ENCODE measurements at regions of chr16 and their contacts with region 1.

Region 1: GRCh38 chr16:9134739-9135138 is 43.3 kb downstream of the HAPSTR1 start:
- DNase-seq: peak; percentile 79
- H3K4me3 Mint-ChIP-seq: no peak overlapping the region
- H3K27ac Mint-ChIP-seq: no peak overlapping the region
- H3K4me1 Mint-ChIP-seq: peaks cover 12% of the 10 kb centered on the region
- H3K27me3 Mint-ChIP-seq: peaks cover 8% of the 10 kb centered on the region

Region 2: DNA sequence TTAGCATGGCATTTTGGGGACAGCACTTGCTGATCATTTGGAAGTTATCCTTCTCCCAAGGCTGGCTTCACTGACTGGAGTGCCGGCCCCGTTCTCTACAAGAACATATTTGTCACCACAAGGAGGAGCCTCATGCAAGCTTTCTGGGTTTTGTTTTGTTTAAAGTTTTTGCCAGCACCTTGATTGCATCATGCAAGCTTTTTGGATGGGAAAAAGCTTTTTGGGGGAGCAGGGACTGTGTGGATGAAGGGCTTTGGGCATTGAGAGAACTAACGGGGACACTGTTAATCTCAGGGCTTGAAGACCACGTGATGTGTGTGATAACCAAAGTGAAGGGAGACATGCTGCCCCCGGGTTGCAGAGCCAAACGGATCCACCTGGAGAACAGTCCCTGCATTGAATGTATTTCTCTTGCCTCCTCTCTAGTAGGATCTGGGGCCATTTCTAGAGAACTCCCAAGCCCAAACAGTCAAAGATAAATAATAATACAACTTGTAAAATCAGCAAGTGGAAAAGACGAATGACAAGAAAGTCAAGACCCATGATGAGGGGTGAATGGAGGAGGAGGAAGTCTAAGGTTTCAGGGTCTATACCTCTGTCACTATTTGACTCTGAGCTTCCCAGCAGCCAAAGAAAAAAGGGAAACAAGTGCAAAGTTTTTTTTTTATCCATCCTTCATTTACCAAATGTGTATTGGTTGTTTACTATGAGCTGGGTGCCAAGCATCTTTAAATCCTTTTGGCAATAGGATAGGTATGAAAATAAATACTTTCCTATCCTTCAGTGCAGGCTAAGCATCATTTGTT is 561.6 kb before region 1 on chr16:
- CTCF ChIA-PET with region 1: no interaction called
- POLR2A ChIA-PET with region 1: no interaction called
- intact Hi-C with region 1: loop called (anchors 5 kb)
- DNase-seq: peak; percentile 21
- H3K4me3 Mint-ChIP-seq: no peak overlapping the region
- H3K27ac Mint-ChIP-seq: no peak overlapping the region
- H3K4me1 Mint-ChIP-seq: peaks cover 1% of the 10 kb centered on the region
- H3K27me3 Mint-ChIP-seq: peaks cover 10% of the 10 kb centered on the region

Region 3: DNA sequence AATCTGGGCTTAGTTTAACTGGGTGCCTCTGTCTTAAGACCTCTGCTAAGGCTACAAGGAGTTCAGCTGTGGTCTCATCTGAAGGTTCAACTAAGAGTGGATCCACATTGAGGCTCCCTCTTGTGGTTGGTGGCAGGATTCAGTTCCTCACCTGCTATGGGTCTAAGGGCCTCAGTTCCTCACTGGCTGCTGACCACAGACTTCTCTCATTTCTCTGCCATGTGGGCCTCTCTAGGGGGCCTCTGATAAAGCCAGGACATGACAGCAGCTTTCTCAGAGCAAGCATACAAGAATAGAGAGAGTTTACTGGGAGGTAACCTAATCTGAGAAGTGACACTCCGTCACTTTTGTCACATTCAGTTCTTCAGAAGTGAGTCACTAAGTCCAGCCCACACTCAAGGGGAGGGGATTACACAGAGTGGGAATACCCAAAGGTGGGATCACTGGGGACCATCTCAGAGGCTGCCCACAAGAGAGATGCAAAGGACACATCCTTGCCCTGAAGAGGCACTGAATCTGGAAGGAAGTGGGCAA is 479.5 kb before region 1 on chr16:
- CTCF ChIA-PET with region 1: interaction called, 3 read pairs
- POLR2A ChIA-PET with region 1: no interaction called
- intact Hi-C with region 1: loop called (anchors 5 kb)
- DNase-seq: peak; percentile 81
- H3K4me3 Mint-ChIP-seq: no peak overlapping the region
- H3K27ac Mint-ChIP-seq: peak overlapping the region; percentile 64
- H3K4me1 Mint-ChIP-seq: peaks cover 18% of the 10 kb centered on the region
- H3K27me3 Mint-ChIP-seq: no peaks in the 10 kb centered on the region

Region 4: DNA sequence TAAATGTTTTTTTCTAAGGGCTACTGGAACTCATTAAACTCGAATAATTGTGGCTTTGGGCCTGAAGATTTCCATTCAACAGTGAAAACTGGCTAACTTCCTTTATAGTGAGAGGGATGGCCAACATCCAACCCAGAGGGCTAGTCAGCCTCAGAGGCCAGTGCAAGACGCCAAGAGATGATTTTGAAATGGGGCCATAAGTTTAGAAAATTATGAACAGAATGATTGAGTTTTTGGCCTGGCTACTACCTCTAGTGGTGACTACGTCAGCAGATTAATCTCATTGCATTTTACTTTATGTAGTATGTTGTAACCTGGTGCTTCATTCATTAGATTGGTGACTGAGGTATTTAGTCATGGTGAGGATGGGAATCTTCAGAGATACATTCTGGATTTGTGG is 14.9 kb before region 1 on chr16:
- CTCF ChIA-PET with region 1: interaction called, 15 read pairs
- POLR2A ChIA-PET with region 1: interaction called, 4 read pairs
- intact Hi-C with region 1: no loop called
- DNase-seq: no peak
- H3K4me3 Mint-ChIP-seq: no peak overlapping the region
- H3K27ac Mint-ChIP-seq: no peak overlapping the region
- H3K4me1 Mint-ChIP-seq: peaks cover 63% of the 10 kb centered on the region
- H3K27me3 Mint-ChIP-seq: no peaks in the 10 kb centered on the region

Region 5: GRCh38 chr16:10181196-10182162 is 1046.7 kb after region 1 on chr16:
- CTCF ChIA-PET with region 1: interaction called, 4 read pairs
- POLR2A ChIA-PET with region 1: no interaction called
- intact Hi-C with region 1: loop called (anchors 2 kb)
- DNase-seq: peak; percentile 59
- H3K4me3 Mint-ChIP-seq: no peak overlapping the region
- H3K27ac Mint-ChIP-seq: no peak overlapping the region
- H3K4me1 Mint-ChIP-seq: peaks cover 3% of the 10 kb centered on the region
- H3K27me3 Mint-ChIP-seq: peaks cover 42% of the 10 kb centered on the region

Measured in activated CD4-positive, alpha-beta memory T cell treated with anti-CD3 and anti-CD28 coated beads for 36 hours (primary cell).